CD8-positive, alpha-beta T cell (primary cell): ENCODE measurements at regions of chr6 and their contacts with region 1.

Region 1: DNA sequence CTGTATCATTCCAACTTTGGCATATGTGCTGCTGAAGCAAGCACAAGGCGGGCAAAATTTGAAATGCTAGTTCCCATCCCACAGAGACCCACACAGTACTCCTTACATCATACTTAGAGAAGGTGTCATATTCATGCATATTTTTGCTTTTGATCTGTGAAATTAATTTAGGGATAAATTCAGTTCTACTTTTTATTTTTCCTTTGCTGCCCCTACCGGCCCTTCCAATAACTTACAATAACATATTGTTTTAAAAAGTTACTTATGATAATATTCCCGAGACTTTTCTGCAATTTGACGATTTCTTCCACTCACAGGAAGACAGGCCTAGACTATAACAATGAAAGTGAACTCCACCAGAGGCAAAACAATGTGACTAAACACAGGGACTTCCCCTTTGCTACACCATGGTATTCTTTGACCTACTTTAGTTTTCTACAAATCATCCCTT is 35.0 kb downstream of the SESN1 start:
- DNase-seq: peak in 2 of 9 experiments; percentile 74 to 83
- ATAC-seq: peak; percentile 99
- H3K4me3 ChIP-seq: no peak overlapping the region
- H3K4me3 Mint-ChIP-seq: peak overlapping the region; percentile 50
- H3K27ac ChIP-seq: peak overlapping the region; percentile 12 to 74
- H3K27ac Mint-ChIP-seq: peak overlapping the region; percentile 94
- H3K4me1 ChIP-seq: peaks cover 23% of the 10 kb centered on the region
- H3K4me1 Mint-ChIP-seq: peaks cover 47% of the 10 kb centered on the region
- H3K27me3 ChIP-seq: no peaks in the 10 kb centered on the region
- H3K27me3 Mint-ChIP-seq: no peaks in the 10 kb centered on the region
- CTCF ChIP-seq: no peak

Region 2: GRCh38 chr6:108944707-108945680 is 114.6 kb before region 1 on chr6:
- CTCF ChIA-PET with region 1: no interaction called
- POLR2A ChIA-PET with region 1: no interaction called
- intact Hi-C with region 1: loop called in 1 of 2 experiments (anchors 5 kb)
- DNase-seq: no peak
- ATAC-seq: no peak
- H3K4me3 ChIP-seq: no peak overlapping the region
- H3K4me3 Mint-ChIP-seq: no peak overlapping the region
- H3K27ac ChIP-seq: no peak overlapping the region
- H3K27ac Mint-ChIP-seq: peak overlapping the region; percentile 37
- H3K4me1 ChIP-seq: peaks cover 27% of the 10 kb centered on the region
- H3K4me1 Mint-ChIP-seq: peaks cover 48% of the 10 kb centered on the region
- H3K27me3 ChIP-seq: no peaks in the 10 kb centered on the region
- H3K27me3 Mint-ChIP-seq: no peaks in the 10 kb centered on the region
- CTCF ChIP-seq: no peak

Region 3: GRCh38 chr6:109036574-109037294 is 22.9 kb before region 1 on chr6:
- CTCF ChIA-PET with region 1: interaction called, 4 read pairs
- POLR2A ChIA-PET with region 1: no interaction called
- intact Hi-C with region 1: loop called in 1 of 2 experiments (anchors 2 kb)
- DNase-seq: peak in 2 of 9 experiments; percentile 42 to 64
- ATAC-seq: peak; percentile 64
- H3K4me3 ChIP-seq: no peak overlapping the region
- H3K4me3 Mint-ChIP-seq: no peak overlapping the region
- H3K27ac ChIP-seq: peak overlapping the region in 1 of 2 experiments; percentile 45
- H3K27ac Mint-ChIP-seq: peak overlapping the region; percentile 64
- H3K4me1 ChIP-seq: peaks cover 22% of the 10 kb centered on the region
- H3K4me1 Mint-ChIP-seq: peaks cover 50% of the 10 kb centered on the region
- H3K27me3 ChIP-seq: no peaks in the 10 kb centered on the region
- H3K27me3 Mint-ChIP-seq: no peaks in the 10 kb centered on the region
- CTCF ChIP-seq: no peak

Region 4: GRCh38 chr6:109229536-109229935 is 169.9 kb after region 1 on chr6:
- CTCF ChIA-PET with region 1: no interaction called
- POLR2A ChIA-PET with region 1: no interaction called
- intact Hi-C with region 1: no loop called
- DNase-seq: no peak
- ATAC-seq: no peak
- H3K4me3 ChIP-seq: no peak overlapping the region
- H3K4me3 Mint-ChIP-seq: no peak overlapping the region
- H3K27ac ChIP-seq: no peak overlapping the region
- H3K27ac Mint-ChIP-seq: no peak overlapping the region
- H3K4me1 ChIP-seq: peaks cover 2% of the 10 kb centered on the region
- H3K4me1 Mint-ChIP-seq: peaks cover 4% of the 10 kb centered on the region
- H3K27me3 ChIP-seq: no peaks in the 10 kb centered on the region
- H3K27me3 Mint-ChIP-seq: no peaks in the 10 kb centered on the region
- CTCF ChIP-seq: no peak

Region 5: DNA sequence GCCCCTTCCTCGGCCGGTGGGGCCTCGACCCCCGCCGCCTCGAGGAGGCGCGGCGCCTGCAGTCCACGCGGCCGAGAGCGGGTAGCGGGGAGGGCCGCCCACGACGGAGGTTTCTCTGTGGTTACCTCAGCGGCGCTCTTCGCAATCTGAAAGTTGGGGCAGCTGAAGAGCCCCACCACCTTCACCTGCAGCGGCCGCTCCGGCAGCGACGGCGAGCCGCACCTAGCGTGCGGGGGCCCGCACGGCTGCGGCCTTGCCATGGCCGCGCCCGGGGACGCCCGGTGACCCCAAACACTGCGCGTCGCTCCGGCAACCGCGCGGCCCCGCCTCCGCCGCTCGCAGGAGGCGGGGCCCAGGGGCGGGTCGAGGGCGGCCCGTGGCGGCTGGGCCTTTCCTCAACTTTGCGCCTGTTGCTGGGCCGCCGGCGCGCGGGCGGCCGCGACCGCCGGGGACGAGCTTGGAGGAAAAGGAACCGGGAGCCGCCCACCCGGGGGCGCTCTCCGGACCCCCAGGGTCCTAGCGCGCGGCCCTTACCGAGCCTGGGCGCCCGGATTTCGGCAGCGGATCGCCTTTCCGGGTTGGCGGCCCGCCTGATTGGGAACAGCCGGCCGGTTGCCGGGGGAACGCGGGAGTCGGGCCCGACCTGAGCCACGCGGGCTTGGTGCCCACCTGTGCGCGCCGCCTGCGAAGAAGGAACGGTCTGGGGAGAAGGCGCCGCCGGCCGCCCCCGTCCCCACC is 380.9 kb after region 1 on chr6 and contains the starts of genes PPIL6 and SMPD2:
- CTCF ChIA-PET with region 1: no interaction called
- POLR2A ChIA-PET with region 1: no interaction called
- intact Hi-C with region 1: no loop called
- DNase-seq: peak; percentile 61 to 92 (median 75)
- ATAC-seq: peak; percentile 79
- H3K4me3 ChIP-seq: peak within 1 kb of the TSS; percentile 68 to 92
- H3K4me3 Mint-ChIP-seq: peak within 1 kb of the TSS; percentile 89
- H3K27ac ChIP-seq: peak within 1 kb of the TSS; percentile 69 to 83
- H3K27ac Mint-ChIP-seq: peak within 1 kb of the TSS; percentile 93
- H3K4me1 ChIP-seq: peaks cover 26% of the 10 kb centered on the region
- H3K4me1 Mint-ChIP-seq: peaks cover 35% of the 10 kb centered on the region
- H3K27me3 ChIP-seq: no peaks in the 10 kb centered on the region
- H3K27me3 Mint-ChIP-seq: no peaks in the 10 kb centered on the region
- CTCF ChIP-seq: peak; percentile 31
- total RNA-seq, gene PPIL6: 1.3 to 1.4 TPM
- total RNA-seq, gene SMPD2: 22.8 to 23.9 TPM